Endothelial cell of umbilical vein (primary cell): ENCODE measurements at regions of chr19 and their contacts with region 1.

Region 1: GRCh38 chr19:40465557-40466150 is at the start of gene BLVRB:
- DNase-seq: peak; percentile 100
- H3K4me3 ChIP-seq: peak within 1 kb of the TSS; percentile 14 to 69 (median 49)
- H3K27ac ChIP-seq: peak within 1 kb of the TSS; percentile 47
- H3K4me1 ChIP-seq: peaks cover 14% of the 10 kb centered on the region
- H3K27me3 ChIP-seq: peaks cover 2 to 5% of the 10 kb centered on the region in 2 experiments
- CTCF ChIP-seq: no peak
- POLR2A ChIP-seq: no peak
- total RNA-seq, gene BLVRB: 30.8 and 35.8 TPM in 2 replicates

Region 2: DNA sequence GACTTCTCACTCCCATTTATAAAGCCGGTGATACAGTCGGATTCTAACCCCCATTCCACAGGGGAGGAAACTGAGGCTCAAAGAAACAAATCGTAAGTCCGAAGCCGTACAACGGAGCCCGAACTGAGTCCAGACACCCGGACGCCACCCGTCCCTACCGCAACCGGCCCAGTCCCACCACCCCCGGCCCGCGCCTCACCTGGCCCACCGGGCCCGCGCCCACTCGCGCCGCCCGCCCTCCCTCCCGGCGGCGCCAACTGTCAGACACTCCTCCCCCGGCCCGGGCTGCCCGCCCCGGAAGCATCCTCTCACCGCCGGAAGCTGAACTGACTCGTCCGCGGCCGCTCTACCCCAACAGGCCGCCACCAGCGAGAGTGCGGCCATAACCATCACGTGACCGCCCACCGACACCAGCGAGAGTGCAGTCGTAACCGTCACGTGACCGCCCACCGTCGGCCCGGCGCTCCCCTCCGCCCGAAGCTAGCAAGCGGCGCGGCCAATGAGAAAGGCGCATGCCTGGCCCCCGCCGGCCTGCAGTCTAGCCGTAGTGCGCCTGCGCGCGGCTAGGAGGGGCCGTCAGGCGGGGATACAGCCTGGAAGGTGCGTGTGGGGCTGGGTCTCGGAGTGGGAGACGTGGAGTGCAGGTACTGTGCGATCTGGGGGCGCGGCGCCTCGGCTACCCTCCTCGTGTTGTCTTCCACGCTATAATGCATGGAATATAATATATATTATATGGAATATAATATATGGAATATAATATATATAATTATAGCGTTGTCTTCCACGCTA is 117.3 kb before region 1 on chr19 and contains the starts of genes C19orf47 and PLD3:
- CTCF ChIA-PET with region 1: no interaction called
- POLR2A ChIA-PET with region 1: no interaction called
- dilution Hi-C with region 1: no loop called
- intact Hi-C with region 1: loop called (anchors 5 kb)
- DNase-seq: peak; percentile 99
- H3K4me3 ChIP-seq: peak within 1 kb of the TSS; percentile 65 to 98 (median 95)
- H3K27ac ChIP-seq: peak within 1 kb of the TSS; percentile 83
- H3K4me1 ChIP-seq: peaks cover 13% of the 10 kb centered on the region
- H3K27me3 ChIP-seq: no peaks in the 10 kb centered on the region
- CTCF ChIP-seq: no peak
- POLR2A ChIP-seq: peak; percentile 98
- total RNA-seq, gene C19orf47: 16.4 and 17.3 TPM in 2 replicates
- total RNA-seq, gene PLD3: 166 and 172 TPM in 2 replicates

Region 3: GRCh38 chr19:40444192-40445028 is 21.2 kb before region 1 on chr19 and contains the start of gene SERTAD3:
- CTCF ChIA-PET with region 1: interaction called, 5 read pairs
- POLR2A ChIA-PET with region 1: interaction called, 13 read pairs
- dilution Hi-C with region 1: no loop called
- intact Hi-C with region 1: loop called (anchors 1 kb)
- DNase-seq: peak; percentile 97
- H3K4me3 ChIP-seq: peak within 1 kb of the TSS; percentile 52 to 98 (median 95)
- H3K27ac ChIP-seq: peak within 1 kb of the TSS; percentile 90
- H3K4me1 ChIP-seq: peaks cover 9% of the 10 kb centered on the region
- H3K27me3 ChIP-seq: no peaks in the 10 kb centered on the region
- CTCF ChIP-seq: peak in 1 of 2 donors; percentile 33
- POLR2A ChIP-seq: peak; percentile 68
- total RNA-seq, gene SERTAD3: 29.9 and 32.0 TPM in 2 replicates

Region 4: GRCh38 chr19:40523322-40524047 is 57.8 kb after region 1 on chr19:
- CTCF ChIA-PET with region 1: interaction called, 10 read pairs
- POLR2A ChIA-PET with region 1: no interaction called
- dilution Hi-C with region 1: no loop called
- intact Hi-C with region 1: loop called (anchors 2 kb)
- DNase-seq: peak; percentile 49
- H3K4me3 ChIP-seq: no peak overlapping the region
- H3K27ac ChIP-seq: no peak overlapping the region
- H3K4me1 ChIP-seq: no peaks in the 10 kb centered on the region
- H3K27me3 ChIP-seq: peaks cover 2 to 7% of the 10 kb centered on the region in 2 experiments
- CTCF ChIP-seq: peak; percentile 67 to 84
- POLR2A ChIP-seq: no peak

Region 5: GRCh38 chr19:40640744-40641143 is 175.1 kb after region 1 on chr19:
- CTCF ChIA-PET with region 1: interaction called, 32 read pairs
- POLR2A ChIA-PET with region 1: no interaction called
- dilution Hi-C with region 1: no loop called
- intact Hi-C with region 1: no loop called
- DNase-seq: peak; percentile 19
- H3K4me3 ChIP-seq: no peak overlapping the region
- H3K27ac ChIP-seq: peak overlapping the region; percentile 10
- H3K4me1 ChIP-seq: peaks cover 14% of the 10 kb centered on the region
- H3K27me3 ChIP-seq: no peaks in the 10 kb centered on the region
- CTCF ChIP-seq: no peak
- POLR2A ChIP-seq: no peak